H1 (cell line): ENCODE measurements at regions of chr6 and their contacts with region 1.

Region 1: GRCh38 chr6:143232849-143233248 is 172.2 kb downstream of the AIG1 start:
- DNase-seq: peak in 1 of 2 experiments; percentile 68
- H3K4me3 ChIP-seq: no peak overlapping the region
- H3K27ac ChIP-seq: no peak overlapping the region
- H3K4me1 ChIP-seq: peaks cover 0 to 2% (median under 1%) of the 10 kb centered on the region in 4 experiments; a peak in 2 of 7 replicates
- H3K27me3 ChIP-seq: no peaks in the 10 kb centered on the region
- CTCF ChIP-seq: peak; percentile 75 to 86 (median 82)
- EP300 ChIP-seq: no peak
- POLR2A ChIP-seq: no peak
- RAD21 ChIP-seq: peak; percentile 74 to 85

Region 2: GRCh38 chr6:143210420-143210819 is 22.4 kb before region 1 on chr6:
- CTCF ChIA-PET with region 1: no interaction called
- POLR2A ChIA-PET with region 1: no interaction called
- DNase-seq: no peak
- H3K4me3 ChIP-seq: no peak overlapping the region
- H3K27ac ChIP-seq: no peak overlapping the region
- H3K4me1 ChIP-seq: no peaks in the 10 kb centered on the region
- H3K27me3 ChIP-seq: no peaks in the 10 kb centered on the region
- CTCF ChIP-seq: no peak
- EP300 ChIP-seq: no peak
- POLR2A ChIP-seq: no peak
- RAD21 ChIP-seq: no peak

Region 3: DNA sequence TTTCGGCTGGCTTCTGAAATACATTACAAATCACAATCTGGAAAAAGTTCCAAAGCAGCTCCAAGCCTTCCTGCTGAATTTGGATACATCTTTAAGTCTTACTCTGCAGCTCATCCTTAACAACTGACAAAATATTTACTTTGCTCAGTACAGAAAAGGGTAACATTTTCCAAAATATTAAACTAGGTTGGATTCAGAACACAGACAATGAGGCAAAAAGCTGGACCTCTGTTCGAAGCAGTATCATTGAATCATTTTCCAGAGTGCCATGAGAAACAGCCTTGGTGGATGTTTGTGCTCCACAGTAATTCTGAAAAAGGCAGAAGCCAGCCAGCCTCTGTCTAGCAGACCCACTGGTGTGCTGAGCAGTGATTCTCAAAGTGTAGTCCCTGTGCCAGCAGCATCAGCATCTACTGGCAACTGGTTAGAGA is 10.0 kb before region 1 on chr6:
- CTCF ChIA-PET with region 1: interaction called, 14 read pairs
- POLR2A ChIA-PET with region 1: interaction called, 3 read pairs
- DNase-seq: no peak
- H3K4me3 ChIP-seq: no peak overlapping the region
- H3K27ac ChIP-seq: no peak overlapping the region
- H3K4me1 ChIP-seq: peaks cover 0 to 6% (median 1%) of the 10 kb centered on the region in 4 experiments; a peak in 1 of 7 replicates
- H3K27me3 ChIP-seq: no peaks in the 10 kb centered on the region
- CTCF ChIP-seq: no peak
- EP300 ChIP-seq: no peak
- POLR2A ChIP-seq: no peak
- RAD21 ChIP-seq: no peak

Region 4: GRCh38 chr6:143248359-143248758 is 15.5 kb after region 1 on chr6:
- CTCF ChIA-PET with region 1: interaction called, 12 read pairs
- POLR2A ChIA-PET with region 1: no interaction called
- DNase-seq: no peak
- H3K4me3 ChIP-seq: no peak overlapping the region
- H3K27ac ChIP-seq: no peak overlapping the region
- H3K4me1 ChIP-seq: no peaks in the 10 kb centered on the region
- H3K27me3 ChIP-seq: no peaks in the 10 kb centered on the region
- CTCF ChIP-seq: no peak
- EP300 ChIP-seq: no peak
- POLR2A ChIP-seq: no peak
- RAD21 ChIP-seq: no peak

Region 5: DNA sequence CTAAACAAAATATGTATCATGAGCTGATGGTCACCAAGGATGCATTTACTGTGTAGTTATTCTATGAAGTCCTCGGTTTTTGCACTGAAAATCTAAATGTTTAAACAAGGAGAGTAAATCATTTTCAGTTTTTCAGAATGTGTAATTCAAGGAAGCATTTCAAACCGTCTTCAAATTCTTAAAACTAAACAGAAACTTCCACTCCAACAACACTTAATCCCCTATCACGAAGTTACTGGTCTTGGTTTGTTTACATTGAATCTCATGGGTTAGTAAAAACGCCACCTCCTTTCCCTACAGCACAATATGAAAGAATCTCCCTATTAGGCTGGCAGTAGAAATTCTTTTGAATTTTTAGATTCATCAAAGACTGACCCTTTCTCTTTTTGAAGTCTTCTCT is 20.7 kb after region 1 on chr6:
- CTCF ChIA-PET with region 1: interaction called, 12 read pairs
- POLR2A ChIA-PET with region 1: no interaction called
- DNase-seq: no peak
- H3K4me3 ChIP-seq: no peak overlapping the region
- H3K27ac ChIP-seq: no peak overlapping the region
- H3K4me1 ChIP-seq: no peaks in the 10 kb centered on the region; a peak in 1 of 7 replicates
- H3K27me3 ChIP-seq: no peaks in the 10 kb centered on the region
- CTCF ChIP-seq: no peak
- EP300 ChIP-seq: no peak
- POLR2A ChIP-seq: no peak
- RAD21 ChIP-seq: no peak

Region 6: GRCh38 chr6:143279385-143279784 is 46.5 kb after region 1 on chr6:
- CTCF ChIA-PET with region 1: interaction called, 18 read pairs
- POLR2A ChIA-PET with region 1: no interaction called
- DNase-seq: no peak
- H3K4me3 ChIP-seq: no peak overlapping the region
- H3K27ac ChIP-seq: no peak overlapping the region
- H3K4me1 ChIP-seq: no peaks in the 10 kb centered on the region
- H3K27me3 ChIP-seq: no peaks in the 10 kb centered on the region
- CTCF ChIP-seq: peak; percentile 46 to 63 (median 56)
- EP300 ChIP-seq: no peak
- POLR2A ChIP-seq: no peak
- RAD21 ChIP-seq: peak; percentile 74 to 81

Region 7: DNA sequence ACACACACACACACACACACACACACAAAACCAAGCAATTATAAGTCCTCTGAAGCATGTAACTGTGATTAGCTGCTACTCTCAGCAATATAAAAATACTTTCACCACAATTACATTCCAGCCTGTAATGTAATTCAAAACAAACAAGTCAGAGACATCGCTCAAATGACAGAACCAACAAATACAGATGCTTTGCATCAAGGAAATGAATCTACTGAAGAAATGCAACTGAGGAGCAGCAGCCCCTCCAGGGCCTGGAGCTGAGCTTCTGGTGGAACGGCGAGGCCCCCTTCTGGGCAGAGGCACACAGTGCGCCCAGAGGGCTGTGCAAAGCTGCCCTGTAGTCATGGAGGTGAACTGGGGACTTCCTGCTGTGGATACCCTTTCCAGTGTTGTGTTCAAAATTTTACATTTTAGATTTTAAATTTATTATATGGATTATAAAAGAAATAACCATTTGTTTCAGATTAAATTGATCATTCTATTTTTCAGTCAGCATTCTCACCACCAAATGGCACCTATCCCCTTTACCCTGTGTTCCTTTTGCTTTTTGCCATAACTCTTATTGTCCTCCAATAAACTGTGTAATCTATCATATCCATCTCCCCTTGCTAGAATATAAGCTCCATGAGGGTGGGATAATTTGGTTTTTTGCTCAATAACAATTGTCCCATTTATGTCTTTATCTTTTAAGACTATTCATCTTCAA is 194.4 kb after region 1 on chr6:
- CTCF ChIA-PET with region 1: interaction called, 51 read pairs
- POLR2A ChIA-PET with region 1: no interaction called
- DNase-seq: peak; percentile 49 to 79
- H3K4me3 ChIP-seq: no peak overlapping the region
- H3K27ac ChIP-seq: no peak overlapping the region
- H3K4me1 ChIP-seq: no peaks in the 10 kb centered on the region
- H3K27me3 ChIP-seq: no peaks in the 10 kb centered on the region
- CTCF ChIP-seq: peak; percentile 90 to 100 (median 95)
- EP300 ChIP-seq: no peak
- POLR2A ChIP-seq: no peak
- RAD21 ChIP-seq: peak; percentile 98 to 99